Activated T-helper 1 cell treated with anti-CD3 and anti-CD28 coated beads, Interleukin-12 subunit alpha, Interleukin-12 subunit beta, Interleukin-2, Interleukin-4 antibody, amounts not matched to agents 30 ng/mL and 10 ng/mL and 1 ng/mL, durations not matched to agents 14 hours and 24 hours and 36 hours (primary cell): ENCODE measurements at regions of chr2 and their contacts with region 1.

Region 1: GRCh38 chr2:144332356-144333142 is 187.4 kb downstream of the ZEB2 start:
- DNase-seq: peak; percentile 91
- H3K4me3 Mint-ChIP-seq: peak overlapping the region; percentile 85
- H3K27ac Mint-ChIP-seq: peak overlapping the region; percentile 98
- H3K4me1 Mint-ChIP-seq: peaks cover 48% of the 10 kb centered on the region
- H3K27me3 Mint-ChIP-seq: no peaks in the 10 kb centered on the region

Region 2: DNA sequence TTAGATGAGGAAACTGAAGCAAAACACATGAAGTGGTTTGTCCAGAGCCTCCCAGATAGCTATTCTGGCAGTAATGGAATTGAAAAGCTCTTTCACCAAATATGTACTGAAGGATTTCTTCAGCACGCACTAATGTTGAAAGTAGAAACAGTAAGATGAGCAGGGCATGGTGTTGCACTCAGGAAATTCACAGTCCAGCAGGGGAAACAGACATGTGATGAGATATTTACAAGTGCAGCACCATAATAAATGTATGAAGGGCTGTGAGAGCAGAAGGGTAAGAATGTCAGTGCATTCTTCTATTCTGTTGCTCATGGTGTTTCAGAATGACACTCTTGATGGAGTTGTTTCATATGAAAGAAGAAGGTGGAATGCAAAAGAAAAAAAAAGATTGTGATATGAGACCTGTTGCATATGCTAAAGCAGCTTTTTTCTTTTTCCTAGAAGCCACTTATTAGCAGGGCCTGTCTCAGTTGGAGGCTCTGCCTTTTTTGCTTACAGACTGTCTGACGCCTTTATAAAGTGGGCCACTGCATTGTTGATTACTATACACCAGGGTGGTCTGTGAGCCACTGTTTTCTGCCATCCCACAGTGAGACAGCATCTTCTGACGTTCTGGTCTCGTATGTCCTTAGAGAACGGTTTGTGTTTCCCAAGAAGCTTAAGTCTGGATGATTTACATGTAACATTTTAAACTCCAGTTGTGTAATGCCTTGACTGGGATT is 686.5 kb before region 1 on chr2:
- intact Hi-C with region 1: no loop called
- DNase-seq: no peak
- H3K4me3 Mint-ChIP-seq: no peak overlapping the region
- H3K27ac Mint-ChIP-seq: no peak overlapping the region
- H3K4me1 Mint-ChIP-seq: peaks cover 10% of the 10 kb centered on the region
- H3K27me3 Mint-ChIP-seq: no peaks in the 10 kb centered on the region

Region 3: DNA sequence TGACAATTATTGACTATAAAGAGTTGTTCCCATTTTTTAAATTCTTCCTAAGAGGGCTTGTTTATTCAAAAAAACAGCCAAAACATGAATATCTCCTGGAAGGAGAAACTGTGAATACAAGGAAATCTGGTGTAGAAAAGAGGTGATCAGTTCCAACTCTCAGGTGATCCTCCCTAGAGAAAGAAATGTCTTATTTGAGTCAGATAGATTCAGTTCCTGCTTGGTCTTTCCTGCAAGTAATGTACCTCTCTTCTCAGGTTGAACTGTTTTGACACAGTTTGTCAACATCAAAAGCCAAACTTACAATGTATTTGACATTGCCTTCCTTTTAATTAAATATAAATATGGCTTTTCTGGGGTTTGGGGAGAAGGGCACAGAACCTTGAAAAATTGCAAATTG is 635.9 kb before region 1 on chr2:
- intact Hi-C with region 1: loop called (anchors 2 kb)
- DNase-seq: no peak
- H3K4me3 Mint-ChIP-seq: no peak overlapping the region
- H3K27ac Mint-ChIP-seq: no peak overlapping the region
- H3K4me1 Mint-ChIP-seq: peaks cover 27% of the 10 kb centered on the region
- H3K27me3 Mint-ChIP-seq: no peaks in the 10 kb centered on the region

Region 4: GRCh38 chr2:143936848-143937722 is 395.5 kb before region 1 on chr2:
- intact Hi-C with region 1: loop called (anchors 5 kb)
- DNase-seq: no peak
- H3K4me3 Mint-ChIP-seq: peak overlapping the region; percentile 70
- H3K27ac Mint-ChIP-seq: no peak overlapping the region
- H3K4me1 Mint-ChIP-seq: peaks cover 14% of the 10 kb centered on the region
- H3K27me3 Mint-ChIP-seq: peaks cover 68% of the 10 kb centered on the region

Region 5: DNA sequence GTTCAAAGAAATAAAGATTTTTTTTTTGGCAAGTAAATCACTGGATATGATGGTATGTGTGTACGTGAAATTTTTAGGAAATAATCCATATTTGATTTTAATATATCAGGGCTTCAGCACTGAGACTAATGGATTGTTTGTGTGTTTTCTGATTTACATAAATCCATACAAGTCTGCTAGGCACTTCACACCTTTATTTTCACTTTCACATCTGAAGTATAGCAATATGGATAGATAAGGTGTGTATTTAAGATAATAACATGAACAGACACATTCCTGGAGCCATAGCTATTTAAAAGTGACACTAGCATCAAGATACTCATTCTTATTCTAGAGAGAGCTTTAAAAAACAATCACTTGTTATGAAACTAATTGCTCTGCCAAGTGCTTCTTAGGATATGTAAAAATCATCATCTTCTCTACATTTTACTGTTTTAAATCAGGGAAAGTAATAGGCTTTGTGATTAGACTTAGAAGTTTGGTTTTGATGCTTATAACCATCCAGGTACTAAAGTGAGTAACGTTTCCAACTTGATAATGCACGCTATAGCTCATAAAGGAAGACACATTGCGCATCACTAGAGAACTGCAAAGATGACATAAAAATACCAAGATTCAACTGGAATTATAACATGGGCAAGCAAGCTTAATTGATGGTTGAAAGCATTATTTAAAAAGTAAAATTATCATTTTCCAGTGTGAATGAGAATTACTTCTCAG is 21.5 kb before region 1 on chr2:
- intact Hi-C with region 1: no loop called
- DNase-seq: no peak
- H3K4me3 Mint-ChIP-seq: no peak overlapping the region
- H3K27ac Mint-ChIP-seq: no peak overlapping the region
- H3K4me1 Mint-ChIP-seq: peaks cover 25% of the 10 kb centered on the region
- H3K27me3 Mint-ChIP-seq: no peaks in the 10 kb centered on the region

Region 6: DNA sequence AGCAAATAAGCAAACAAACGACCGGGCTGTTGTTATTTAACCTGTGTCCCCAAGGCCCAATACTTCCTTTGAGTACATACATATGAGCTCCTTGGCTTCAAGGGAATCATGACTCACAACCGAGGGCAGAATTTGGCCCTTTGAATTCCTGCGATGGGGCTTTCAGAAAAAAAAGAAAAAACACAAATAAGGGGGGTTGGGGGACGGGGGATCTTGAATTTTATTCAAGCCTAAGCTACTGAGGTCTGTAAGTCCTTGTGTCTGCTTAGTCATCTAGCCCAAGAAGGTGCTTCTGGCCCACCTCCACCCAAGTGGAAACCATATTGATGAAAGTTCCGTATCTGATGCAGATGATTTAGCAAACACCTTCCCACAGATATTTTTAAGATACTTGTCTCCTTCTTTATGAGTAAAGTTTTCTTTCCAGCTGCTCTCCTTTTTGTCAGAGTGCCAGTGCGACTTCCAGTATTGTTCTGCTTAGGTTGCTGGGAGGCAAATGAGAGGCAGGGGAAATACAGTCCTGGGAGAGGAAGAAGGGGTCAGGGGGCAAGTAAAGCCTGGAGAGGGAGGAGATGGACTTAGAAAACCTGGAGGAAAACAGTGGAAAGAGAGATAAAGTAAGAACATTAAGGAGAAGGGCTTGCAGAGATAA is 17.7 kb after region 1 on chr2:
- intact Hi-C with region 1: loop called (anchors 1 kb)
- DNase-seq: no peak
- H3K4me3 Mint-ChIP-seq: no peak overlapping the region
- H3K27ac Mint-ChIP-seq: peak overlapping the region; percentile 62
- H3K4me1 Mint-ChIP-seq: peaks cover 10% of the 10 kb centered on the region
- H3K27me3 Mint-ChIP-seq: no peaks in the 10 kb centered on the region

Region 7: DNA sequence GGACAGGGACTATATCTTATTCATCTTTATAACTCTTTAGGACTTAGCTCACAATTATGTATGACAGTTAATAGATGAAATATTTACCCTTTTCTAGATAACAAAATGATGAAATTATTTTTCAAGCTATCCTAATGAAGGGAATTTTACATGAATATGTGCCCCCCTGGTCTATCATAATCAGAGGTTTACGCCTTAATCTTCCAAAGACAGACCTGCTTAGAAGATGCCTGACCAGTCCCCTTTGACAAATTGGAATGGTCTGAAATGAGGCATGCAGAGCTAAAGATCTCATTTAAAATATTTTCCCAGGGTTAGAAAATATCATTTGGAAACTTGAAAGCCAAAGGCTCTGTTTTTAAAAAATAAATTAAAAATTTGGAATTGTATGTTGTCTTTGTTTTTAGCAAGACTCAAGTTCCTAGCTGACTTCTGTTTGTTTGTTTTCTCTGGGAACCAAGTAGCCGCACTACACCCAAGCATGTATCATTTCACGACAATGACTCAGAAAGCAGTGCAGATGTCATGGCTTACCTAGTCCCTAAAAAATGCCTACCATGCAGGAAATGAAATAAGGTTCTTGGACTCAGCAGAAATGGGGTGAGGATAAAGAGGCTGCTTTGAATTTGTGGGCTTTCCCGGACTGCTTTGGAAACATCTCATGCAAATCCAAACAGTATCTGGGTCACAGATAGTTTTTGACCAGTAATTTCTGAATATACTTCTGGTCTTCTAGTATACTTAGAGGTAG is 25.2 kb after region 1 on chr2:
- intact Hi-C with region 1: loop called (anchors 1 kb)
- DNase-seq: peak; percentile 13
- H3K4me3 Mint-ChIP-seq: no peak overlapping the region
- H3K27ac Mint-ChIP-seq: peak overlapping the region; percentile 71
- H3K4me1 Mint-ChIP-seq: peaks cover 30% of the 10 kb centered on the region
- H3K27me3 Mint-ChIP-seq: no peaks in the 10 kb centered on the region

Region 8: DNA sequence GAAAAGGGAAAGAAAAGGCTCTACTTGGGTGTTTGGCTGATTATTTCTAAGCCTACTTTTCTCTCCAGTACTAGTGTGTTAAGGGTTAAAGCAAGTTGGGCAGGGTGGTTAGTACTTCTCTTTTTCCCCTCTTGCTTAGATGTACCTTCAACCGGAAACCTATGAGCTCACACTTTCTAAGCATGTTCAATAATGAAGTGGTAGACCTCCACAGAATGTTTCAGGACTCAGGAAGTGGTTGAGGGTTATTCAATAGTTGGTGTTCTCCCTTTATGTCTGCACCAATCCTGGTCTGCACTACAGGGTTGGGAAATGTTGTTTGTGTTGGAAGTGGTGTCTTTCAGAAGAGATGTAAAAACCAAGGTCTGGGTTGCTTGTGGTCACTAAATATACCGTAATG is 50.3 kb after region 1 on chr2:
- intact Hi-C with region 1: loop called (anchors 2 kb)
- DNase-seq: peak; percentile 13
- H3K4me3 Mint-ChIP-seq: no peak overlapping the region
- H3K27ac Mint-ChIP-seq: peak overlapping the region; percentile 32
- H3K4me1 Mint-ChIP-seq: peaks cover 44% of the 10 kb centered on the region
- H3K27me3 Mint-ChIP-seq: peaks cover 8% of the 10 kb centered on the region